ENCODE measurements at regions of chr11 and their contacts with region 1.

Region 1: GRCh38 chr11:83292709-83293456 is 6.7 kb upstream of the CCDC90B start:
- DNase-seq: no peak
- H3K4me3 ChIP-seq: no peak overlapping the region
- H3K27ac ChIP-seq: no peak overlapping the region
- H3K4me1 ChIP-seq: no peaks in the 10 kb centered on the region
- H3K27me3 ChIP-seq: no peaks in the 10 kb centered on the region
- CTCF ChIP-seq: peak; percentile 53 to 71 (median 61)
- EP300 ChIP-seq: no peak
- POLR2A ChIP-seq: no peak

Region 2: GRCh38 chr11:83449338-83449913 is 156.5 kb after region 1 on chr11:
- intact Hi-C with region 1: no loop called
- DNase-seq: no peak
- H3K4me3 ChIP-seq: no peak overlapping the region
- H3K27ac ChIP-seq: no peak overlapping the region
- H3K4me1 ChIP-seq: no peaks in the 10 kb centered on the region
- H3K27me3 ChIP-seq: no peaks in the 10 kb centered on the region
- CTCF ChIP-seq: no peak
- EP300 ChIP-seq: no peak
- POLR2A ChIP-seq: no peak

Region 3: GRCh38 chr11:83724008-83724461 is 431.2 kb after region 1 on chr11:
- intact Hi-C with region 1: loop called (anchors 2 kb)
- DNase-seq: no peak
- H3K4me3 ChIP-seq: peak overlapping the region; percentile 9 to 40 (median 36)
- H3K27ac ChIP-seq: peak overlapping the region; percentile 48 to 71 (median 63)
- H3K4me1 ChIP-seq: peaks cover 0 to 26% (median 18%) of the 10 kb centered on the region in 4 donors
- H3K27me3 ChIP-seq: no peaks in the 10 kb centered on the region
- CTCF ChIP-seq: peak in 1 of 4 experiments; percentile 32
- EP300 ChIP-seq: no peak
- POLR2A ChIP-seq: no peak

Region 4: DNA sequence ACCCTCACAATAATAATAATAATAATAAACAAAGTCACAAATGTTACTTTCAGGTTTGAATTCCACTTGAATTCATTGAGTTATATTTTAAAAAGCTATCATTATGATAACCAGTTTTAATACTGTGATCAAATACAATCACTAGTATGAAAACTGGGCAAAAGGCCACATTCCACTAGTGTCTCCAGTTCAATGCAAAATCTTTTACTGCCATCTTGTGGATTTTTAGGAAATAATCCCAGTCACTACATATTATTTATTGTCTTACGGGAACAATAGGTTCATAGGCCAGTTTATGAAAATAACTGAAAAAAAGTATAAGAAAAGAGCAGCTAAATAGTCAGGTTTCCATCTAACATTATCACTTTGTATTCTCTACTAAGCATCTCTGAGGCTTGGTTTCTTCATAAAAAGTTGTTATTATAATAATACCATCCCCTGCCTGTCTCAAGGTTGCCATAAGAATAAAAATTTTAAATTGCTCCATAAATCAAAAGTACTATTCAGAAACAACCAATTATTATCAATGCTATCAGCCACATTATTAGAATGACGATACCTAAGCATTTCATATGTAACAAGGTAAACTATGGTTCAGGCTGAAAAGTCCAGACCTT is 527.2 kb after region 1 on chr11:
- intact Hi-C with region 1: loop called (anchors 1 kb)
- DNase-seq: no peak
- H3K4me3 ChIP-seq: no peak overlapping the region
- H3K27ac ChIP-seq: no peak overlapping the region
- H3K4me1 ChIP-seq: no peaks in the 10 kb centered on the region
- H3K27me3 ChIP-seq: no peaks in the 10 kb centered on the region
- CTCF ChIP-seq: peak in 3 of 4 experiments; percentile 44 to 56 (median 50)
- EP300 ChIP-seq: no peak
- POLR2A ChIP-seq: no peak